ENCODE measurements at regions of chr10 and their contacts with region 1.

Region 1: DNA sequence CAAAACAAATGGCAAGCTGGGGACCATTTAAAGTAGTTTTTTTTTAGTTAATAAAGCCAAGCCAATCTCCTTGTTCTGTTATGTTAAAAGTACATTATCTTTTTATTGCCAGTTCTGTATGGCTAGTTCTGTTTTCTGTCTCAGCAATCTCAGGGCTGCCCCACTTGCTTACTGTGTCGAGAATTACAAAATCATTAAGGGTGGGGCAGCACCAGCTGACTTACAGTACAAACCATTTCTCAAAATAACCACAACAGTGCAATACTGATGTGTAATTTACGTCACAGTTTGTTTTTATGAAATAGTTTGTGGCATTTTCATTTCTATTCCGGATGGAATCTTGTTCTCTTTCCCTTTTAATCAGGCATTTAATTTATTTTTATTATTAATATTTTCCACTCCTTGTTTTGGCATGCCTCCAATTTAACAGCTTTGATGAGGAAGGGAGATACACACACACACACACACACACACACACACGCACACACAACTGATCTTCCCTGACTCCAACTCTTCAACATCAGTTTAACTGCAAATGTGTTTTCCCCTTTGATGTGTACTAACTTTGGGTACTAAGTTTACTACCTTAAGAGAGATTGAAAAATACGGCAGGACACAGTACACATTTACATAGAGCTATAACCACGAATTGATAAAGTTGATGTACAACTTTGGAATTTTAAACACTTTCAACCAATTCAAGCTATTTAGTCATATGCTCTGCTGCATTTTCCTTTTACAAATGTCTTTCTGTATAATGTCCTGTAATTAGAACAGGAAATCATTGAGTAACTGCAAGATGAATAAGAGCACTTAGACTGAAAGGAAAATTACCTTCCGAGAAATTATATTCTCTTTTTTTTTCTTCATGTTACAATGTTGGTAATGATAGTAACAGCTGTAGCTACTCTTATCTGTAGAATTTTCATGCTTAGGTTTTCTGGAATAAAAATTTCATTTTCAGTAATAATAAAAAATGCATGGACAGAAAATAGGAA is 91.5 kb downstream of the ARID5B start:
- DNase-seq: peak; percentile 84
- H3K4me3 Mint-ChIP-seq: peak overlapping the region; percentile 47
- H3K27ac Mint-ChIP-seq: peak overlapping the region; percentile 96
- H3K4me1 Mint-ChIP-seq: peaks cover 85% of the 10 kb centered on the region
- H3K27me3 Mint-ChIP-seq: no peaks in the 10 kb centered on the region

Region 2: GRCh38 chr10:61890430-61890829 is 102.5 kb before region 1 on chr10:
- CTCF ChIA-PET with region 1: no interaction called
- intact Hi-C with region 1: no loop called
- DNase-seq: no peak
- H3K4me3 Mint-ChIP-seq: no peak overlapping the region
- H3K27ac Mint-ChIP-seq: no peak overlapping the region
- H3K4me1 Mint-ChIP-seq: peaks cover 19% of the 10 kb centered on the region
- H3K27me3 Mint-ChIP-seq: peaks cover 3% of the 10 kb centered on the region

Region 3: DNA sequence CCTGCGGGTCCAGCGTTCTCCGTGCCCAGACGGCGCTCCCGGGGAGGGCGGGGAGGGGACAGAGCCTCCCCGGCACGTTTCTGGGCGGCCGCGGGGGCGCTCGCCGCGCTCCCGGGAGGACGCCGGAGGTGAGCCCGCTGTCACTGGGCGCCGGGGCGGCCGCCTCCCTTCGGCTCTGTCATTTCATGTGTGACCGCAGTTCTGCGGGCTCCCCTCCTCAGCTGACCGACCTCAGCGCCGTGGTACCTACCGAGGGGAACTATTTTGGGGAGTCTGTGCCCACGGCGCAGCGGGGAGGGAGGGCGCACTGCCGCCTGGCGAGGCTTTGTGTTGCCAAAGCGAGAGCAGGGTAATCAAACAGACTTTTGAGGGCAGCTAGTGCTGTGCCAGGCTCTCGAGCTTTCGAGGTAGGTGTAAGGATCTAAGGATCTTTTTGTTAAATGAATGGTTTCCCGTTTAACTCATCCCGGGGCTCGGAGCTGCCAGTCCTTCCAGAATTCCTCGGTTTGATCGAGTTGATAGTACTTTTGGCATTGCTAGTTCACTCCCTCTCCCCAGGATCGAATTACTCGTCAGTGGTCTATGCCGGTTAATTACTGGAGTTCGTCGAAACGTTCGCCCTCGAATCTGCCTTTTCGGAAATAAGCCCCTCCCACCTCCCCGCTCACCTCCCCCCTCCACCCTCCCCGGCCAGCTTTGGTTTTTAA is 89.6 kb before region 1 on chr10:
- CTCF ChIA-PET with region 1: interaction called, 8 read pairs
- intact Hi-C with region 1: loop called (anchors 1 kb)
- DNase-seq: peak; percentile 74
- H3K4me3 Mint-ChIP-seq: peak overlapping the region; percentile 99
- H3K27ac Mint-ChIP-seq: peak overlapping the region; percentile 100
- H3K4me1 Mint-ChIP-seq: peaks cover 42% of the 10 kb centered on the region
- H3K27me3 Mint-ChIP-seq: no peaks in the 10 kb centered on the region

Region 4: GRCh38 chr10:61943674-61944410 is 49.1 kb before region 1 on chr10:
- CTCF ChIA-PET with region 1: interaction called, 5 read pairs
- intact Hi-C with region 1: loop called (anchors 1 kb)
- DNase-seq: peak; percentile 47
- H3K4me3 Mint-ChIP-seq: peak overlapping the region; percentile 62
- H3K27ac Mint-ChIP-seq: peak overlapping the region; percentile 98
- H3K4me1 Mint-ChIP-seq: peaks cover 71% of the 10 kb centered on the region
- H3K27me3 Mint-ChIP-seq: no peaks in the 10 kb centered on the region

Region 5: GRCh38 chr10:62019013-62019684 is 26.2 kb after region 1 on chr10:
- CTCF ChIA-PET with region 1: interaction called, 12 read pairs
- intact Hi-C with region 1: loop called (anchors 1 kb)
- DNase-seq: no peak
- H3K4me3 Mint-ChIP-seq: peak overlapping the region; percentile 39
- H3K27ac Mint-ChIP-seq: peak overlapping the region; percentile 99
- H3K4me1 Mint-ChIP-seq: peaks cover 90% of the 10 kb centered on the region
- H3K27me3 Mint-ChIP-seq: no peaks in the 10 kb centered on the region

Region 6: DNA sequence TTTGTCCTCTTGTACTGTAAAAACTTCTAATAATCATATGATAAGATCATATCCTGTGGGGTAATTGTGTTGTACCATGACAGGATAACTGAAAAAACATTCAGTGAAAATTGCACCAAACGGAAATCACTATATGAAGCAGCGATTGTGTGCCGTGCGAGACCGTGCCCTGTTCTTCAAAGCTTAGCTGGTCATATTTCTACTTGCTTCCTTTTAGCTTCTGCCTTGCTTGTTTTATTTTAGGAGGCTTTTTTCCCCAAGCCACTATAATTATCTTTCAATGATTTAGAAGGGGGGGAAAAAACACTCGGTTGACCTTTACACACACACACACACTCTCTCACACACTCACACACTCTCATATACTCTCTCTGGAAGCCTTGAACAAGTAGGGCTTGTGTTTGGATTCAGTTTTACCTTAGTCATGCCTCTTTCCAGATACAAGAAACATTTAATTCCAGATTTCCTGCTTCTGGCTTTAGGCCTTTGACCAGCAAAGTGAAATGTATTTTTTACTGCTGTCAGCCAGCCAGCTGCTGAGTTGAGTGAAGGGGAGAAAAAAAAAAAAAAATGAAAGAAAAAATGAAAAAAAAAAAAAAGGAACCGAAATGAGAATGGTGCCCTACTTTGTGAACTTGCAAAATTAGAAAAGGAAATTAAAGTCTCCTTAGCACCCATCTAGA is 89.9 kb after region 1 on chr10:
- CTCF ChIA-PET with region 1: no interaction called
- intact Hi-C with region 1: loop called (anchors 1 kb)
- DNase-seq: peak; percentile 80
- H3K4me3 Mint-ChIP-seq: peak overlapping the region; percentile 41
- H3K27ac Mint-ChIP-seq: peak overlapping the region; percentile 89
- H3K4me1 Mint-ChIP-seq: peaks cover 86% of the 10 kb centered on the region
- H3K27me3 Mint-ChIP-seq: no peaks in the 10 kb centered on the region

Region 7: DNA sequence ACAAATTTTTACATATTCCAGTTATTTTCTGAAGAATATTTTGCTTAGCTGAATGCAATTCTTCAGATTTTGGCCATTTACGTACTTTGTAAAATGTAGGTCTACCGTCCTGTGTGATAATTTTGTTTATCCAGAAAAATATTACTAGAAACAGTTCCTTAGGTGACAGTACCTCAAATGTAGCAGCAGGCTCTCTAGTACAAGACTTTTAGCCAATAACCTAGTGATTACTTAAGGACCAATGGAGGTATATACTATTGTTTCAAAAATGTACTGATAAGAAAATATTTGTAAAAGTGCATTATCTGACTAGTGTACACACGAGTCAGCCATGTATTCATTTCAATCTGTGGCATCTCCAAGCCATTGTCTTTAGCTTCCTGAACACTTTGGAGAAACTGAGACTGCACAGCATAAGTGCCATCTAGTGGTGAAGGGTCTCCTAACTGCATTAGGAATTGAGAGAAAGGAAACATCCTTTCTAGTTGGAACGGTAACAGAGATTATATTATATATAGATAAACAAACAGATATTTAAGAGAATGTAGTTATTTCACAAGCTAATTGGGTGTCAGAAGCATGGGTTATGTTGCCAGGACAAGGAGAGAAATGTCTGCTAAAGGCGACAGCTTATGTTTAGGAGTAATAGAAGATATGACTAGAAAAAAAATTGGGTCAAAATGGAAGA is 252.0 kb after region 1 on chr10:
- CTCF ChIA-PET with region 1: interaction called, 4 read pairs
- intact Hi-C with region 1: loop called (anchors 1 kb)
- DNase-seq: peak; percentile 74
- H3K4me3 Mint-ChIP-seq: no peak overlapping the region
- H3K27ac Mint-ChIP-seq: peak overlapping the region; percentile 76
- H3K4me1 Mint-ChIP-seq: peaks cover 38% of the 10 kb centered on the region
- H3K27me3 Mint-ChIP-seq: no peaks in the 10 kb centered on the region